IMR-90 (cell line): ENCODE measurements at regions of chr2 and their contacts with region 1.

Region 1: DNA sequence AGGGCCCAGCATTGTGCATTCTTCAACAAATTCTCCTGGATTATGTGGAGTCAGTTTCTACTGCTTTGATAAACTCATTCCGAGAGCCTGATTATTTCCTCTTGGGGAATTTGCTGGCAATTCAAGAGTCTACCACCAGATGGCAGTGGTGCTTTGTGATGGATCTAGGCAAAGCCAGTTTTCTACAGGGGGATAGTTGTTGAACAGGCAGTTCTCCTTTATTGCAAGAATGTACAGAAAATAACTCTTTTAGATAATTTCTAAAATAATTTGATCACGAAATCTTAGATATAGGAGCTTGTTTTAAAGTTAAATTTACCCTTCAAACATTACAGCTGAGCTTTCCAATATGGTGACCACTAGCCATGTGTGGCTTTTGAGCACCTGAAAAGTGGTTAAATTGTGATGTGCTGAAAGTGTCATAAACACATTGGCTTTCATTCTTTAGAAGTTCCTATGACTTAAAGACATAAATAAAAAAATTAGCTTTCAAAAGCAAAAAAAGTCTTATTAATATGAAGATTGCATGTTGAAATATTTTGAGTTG is 66.7 kb upstream of the HAAO start:
- DNase-seq: peak; percentile 81
- ATAC-seq: peak; percentile 81
- H3K4me3 ChIP-seq: no peak overlapping the region
- H3K27ac ChIP-seq: no peak overlapping the region
- H3K4me1 ChIP-seq: peaks cover 5% of the 10 kb centered on the region
- H3K27me3 ChIP-seq: no peaks in the 10 kb centered on the region
- CTCF ChIP-seq: peak; percentile 93
- POLR2A ChIP-seq: no peak
- RAD21 ChIP-seq: peak; percentile 95

Region 2: DNA sequence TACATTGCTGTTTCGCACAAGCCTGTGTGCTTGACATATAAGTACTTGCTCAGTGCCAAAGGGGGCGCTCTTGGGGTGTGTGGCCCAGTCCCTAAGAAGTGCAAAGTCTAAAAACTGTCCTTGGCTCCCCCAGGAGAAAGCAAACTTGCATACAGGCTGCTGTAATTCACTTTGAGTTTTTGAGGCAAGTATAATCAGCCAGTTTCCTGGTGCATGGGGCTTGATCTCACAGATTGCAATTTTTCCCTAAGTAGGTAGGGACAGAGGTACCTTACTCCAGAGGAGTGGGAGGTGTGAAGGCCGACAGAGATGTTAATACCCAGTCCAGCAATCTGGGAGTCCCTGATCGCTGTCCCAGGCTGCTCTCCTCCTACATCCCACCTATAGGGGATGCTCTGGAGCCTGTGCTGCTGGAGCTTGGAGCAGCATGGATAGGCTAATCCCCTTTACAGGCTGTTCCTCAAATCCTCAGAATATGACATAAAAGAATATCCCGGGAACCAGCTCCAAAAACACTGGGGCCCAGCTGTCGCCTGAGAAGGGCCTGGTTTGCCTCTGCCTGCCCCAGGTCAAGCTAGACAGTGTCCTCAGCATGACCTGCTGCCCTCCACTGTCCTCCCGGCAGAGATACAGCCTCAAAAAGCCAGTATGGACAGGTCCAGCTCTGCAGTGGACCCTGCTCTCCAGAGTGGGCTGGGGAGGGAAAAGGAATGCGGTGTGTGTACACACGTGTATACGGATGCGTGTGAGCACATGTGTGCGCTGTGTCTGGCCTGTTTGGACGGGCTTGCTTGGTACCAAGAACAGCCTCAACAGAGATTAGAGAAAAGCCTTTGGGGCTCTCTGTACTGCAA is 69.8 kb after region 1 on chr2:
- CTCF ChIA-PET with region 1: interaction called, 3 read pairs
- POLR2A ChIA-PET with region 1: no interaction called
- dilution Hi-C with region 1: no loop called
- in situ Hi-C with region 1: no loop called
- intact Hi-C with region 1: loop called (anchors 1 kb)
- DNase-seq: peak; percentile 47
- ATAC-seq: no peak
- H3K4me3 ChIP-seq: no peak overlapping the region
- H3K27ac ChIP-seq: peak overlapping the region; percentile 85
- H3K4me1 ChIP-seq: peaks cover 59% of the 10 kb centered on the region
- H3K27me3 ChIP-seq: no peaks in the 10 kb centered on the region
- CTCF ChIP-seq: peak; percentile 47
- POLR2A ChIP-seq: no peak
- RAD21 ChIP-seq: peak; percentile 22; the same call in 1 of the 2 replicates

Region 3: DNA sequence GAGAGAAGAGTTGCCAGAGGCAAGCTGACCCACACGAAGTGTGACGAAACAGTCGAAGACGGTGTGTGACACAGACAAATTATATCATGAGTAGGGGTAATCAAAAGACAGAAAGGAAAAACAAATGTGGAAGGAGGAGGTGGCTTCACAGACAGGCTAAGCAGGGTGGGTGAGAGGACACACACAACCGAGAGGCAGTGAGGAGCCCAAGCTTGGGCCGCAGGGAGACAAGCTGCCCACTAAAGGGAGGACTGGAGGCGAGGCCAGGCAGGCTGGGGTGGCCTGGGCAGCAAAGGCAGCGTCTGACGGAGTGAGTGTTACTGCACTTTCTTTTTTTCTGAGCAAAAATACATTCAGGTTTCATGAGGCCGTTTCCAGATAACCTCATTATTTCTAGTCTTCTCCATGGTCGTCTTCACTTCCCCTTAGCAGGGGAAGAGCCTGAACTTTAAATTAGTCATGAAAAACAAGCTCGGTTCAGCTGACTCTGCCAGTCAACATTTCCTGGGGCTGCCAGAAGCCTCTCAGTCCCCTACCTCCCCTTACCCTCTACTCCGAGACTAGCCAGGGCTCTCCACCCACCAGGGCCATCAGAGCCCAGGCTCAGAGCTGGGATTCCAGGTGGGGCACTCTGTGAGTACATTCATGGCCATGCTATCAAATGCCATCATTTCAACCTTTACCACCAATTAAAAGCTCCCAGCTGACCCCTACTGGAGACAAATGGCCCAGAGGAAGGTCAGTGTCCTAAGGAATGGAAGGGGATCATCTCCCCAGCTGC is 381.1 kb after region 1 on chr2:
- CTCF ChIA-PET with region 1: no interaction called
- POLR2A ChIA-PET with region 1: no interaction called
- dilution Hi-C with region 1: no loop called
- in situ Hi-C with region 1: loop called (anchors 10 kb)
- intact Hi-C with region 1: no loop called
- DNase-seq: no peak
- ATAC-seq: no peak
- H3K4me3 ChIP-seq: no peak overlapping the region
- H3K27ac ChIP-seq: no peak overlapping the region
- H3K4me1 ChIP-seq: no peaks in the 10 kb centered on the region
- H3K27me3 ChIP-seq: no peaks in the 10 kb centered on the region
- CTCF ChIP-seq: 0 out of 2 replicates have a peak, but pooled peaks have one; percentile 6
- POLR2A ChIP-seq: no peak
- RAD21 ChIP-seq: no peak

Region 4: DNA sequence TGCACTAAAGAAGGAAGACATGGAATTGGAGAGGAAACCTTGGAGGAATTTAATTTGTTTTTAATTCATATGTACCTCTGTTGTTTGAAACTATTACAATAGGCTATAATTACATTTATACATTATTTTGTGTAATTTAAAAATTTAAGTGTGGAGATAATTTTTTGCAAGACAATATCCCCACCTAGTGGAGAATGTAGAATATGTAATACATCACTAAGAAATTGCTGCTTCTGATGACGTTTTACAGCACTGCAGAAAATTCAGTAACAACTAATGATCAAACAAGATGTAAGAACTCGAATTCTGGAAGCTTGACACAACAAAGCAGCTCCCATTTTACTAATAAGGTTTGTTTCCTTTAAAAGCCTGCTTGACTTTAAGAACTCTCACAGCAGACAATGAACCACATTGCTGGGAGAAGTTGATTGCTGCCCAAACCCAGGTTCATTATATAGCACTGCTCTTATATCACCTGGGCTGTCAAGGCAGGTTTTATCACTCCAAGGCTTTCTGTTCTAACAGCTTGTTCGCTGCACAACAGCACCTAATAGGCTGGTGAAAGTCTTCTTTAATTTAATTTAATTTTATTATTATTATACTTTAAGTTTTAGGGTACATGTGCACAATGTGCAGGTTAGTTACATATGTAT is 683.3 kb after region 1 on chr2:
- CTCF ChIA-PET with region 1: interaction called, 4 read pairs
- POLR2A ChIA-PET with region 1: no interaction called
- dilution Hi-C with region 1: no loop called
- in situ Hi-C with region 1: no loop called
- intact Hi-C with region 1: loop called (anchors 1 kb)
- DNase-seq: peak; percentile 68
- ATAC-seq: peak; percentile 77
- H3K4me3 ChIP-seq: no peak overlapping the region
- H3K27ac ChIP-seq: no peak overlapping the region
- H3K4me1 ChIP-seq: peaks cover 7% of the 10 kb centered on the region
- H3K27me3 ChIP-seq: no peaks in the 10 kb centered on the region
- CTCF ChIP-seq: peak; percentile 58
- POLR2A ChIP-seq: no peak
- RAD21 ChIP-seq: peak; percentile 72